Panc1 (cell line): ENCODE measurements at regions of chr1 and their contacts with region 1.

Region 1: GRCh38 chr1:28369371-28370238 is at the start of gene PHACTR4:
- DNase-seq: no peak
- ATAC-seq: peak; percentile 98
- H3K4me3 ChIP-seq: peak within 1 kb of the TSS; percentile 84 to 99
- H3K27ac ChIP-seq: peak within 1 kb of the TSS; percentile 94
- H3K4me1 ChIP-seq: peaks cover 23% of the 10 kb centered on the region
- H3K27me3 ChIP-seq: no peaks in the 10 kb centered on the region
- CTCF ChIP-seq: no peak
- total RNA-seq, gene PHACTR4: 63.4 TPM

Region 2: DNA sequence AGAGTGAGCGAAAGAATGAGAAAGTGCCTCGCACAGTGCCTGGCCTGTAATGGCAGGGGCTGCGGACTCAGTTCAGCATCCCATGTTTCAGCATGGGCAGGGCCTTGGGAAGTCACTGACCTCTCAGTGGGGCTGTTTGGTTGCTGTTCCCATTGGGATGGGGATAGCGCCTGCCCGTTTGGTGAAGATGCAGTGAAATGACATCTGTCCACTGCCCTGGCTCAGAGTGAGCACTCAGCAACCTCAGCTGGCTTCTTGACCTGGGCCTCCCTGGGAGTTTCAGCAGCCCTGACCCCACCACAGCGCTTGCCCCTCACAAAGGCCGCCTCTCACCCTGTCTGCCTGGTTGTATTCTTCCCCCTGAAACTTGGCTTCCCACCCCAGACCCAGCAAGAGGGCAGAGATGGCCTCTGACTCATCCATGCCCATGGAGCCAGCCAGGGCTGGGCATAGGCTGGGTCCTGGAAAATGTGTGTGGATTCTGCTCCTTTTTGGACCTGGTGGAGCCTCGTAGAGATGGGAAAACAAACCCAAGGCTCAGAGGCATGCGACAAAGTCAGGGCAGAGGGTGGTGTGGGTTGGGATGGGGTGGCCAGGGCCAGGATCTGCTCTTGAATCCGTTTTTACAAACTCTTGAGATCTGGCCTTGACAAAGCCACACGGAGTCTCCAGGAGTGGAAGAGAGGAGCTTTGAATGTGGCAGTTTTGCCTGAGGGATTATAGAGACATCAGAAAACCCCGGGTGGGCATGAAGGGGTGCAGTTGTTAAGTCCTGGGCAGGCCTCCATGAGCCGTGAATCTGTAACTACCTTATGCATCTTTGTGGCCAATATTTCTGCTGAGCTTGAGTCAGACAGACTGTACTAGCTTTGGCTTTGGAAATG is 408.6 kb before region 1 on chr1:
- CTCF ChIA-PET with region 1: interaction called, 11 read pairs
- POLR2A ChIA-PET with region 1: no interaction called
- in situ Hi-C with region 1: no loop called
- intact Hi-C with region 1: no loop called
- DNase-seq: no peak
- ATAC-seq: no peak
- H3K4me3 ChIP-seq: peak overlapping the region; percentile 78 to 83; a peak in 3 of 4 replicates
- H3K27ac ChIP-seq: peak overlapping the region; percentile 83; the same call in 1 of the 2 replicates
- H3K4me1 ChIP-seq: peaks cover 22% of the 10 kb centered on the region
- H3K27me3 ChIP-seq: no peaks in the 10 kb centered on the region
- CTCF ChIP-seq: no peak

Region 3: GRCh38 chr1:28180306-28181305 is 189.0 kb before region 1 on chr1:
- CTCF ChIA-PET with region 1: interaction called, 13 read pairs
- POLR2A ChIA-PET with region 1: no interaction called
- in situ Hi-C with region 1: no loop called
- intact Hi-C with region 1: no loop called
- DNase-seq: no peak
- ATAC-seq: no peak
- H3K4me3 ChIP-seq: no peak overlapping the region
- H3K27ac ChIP-seq: no peak overlapping the region
- H3K4me1 ChIP-seq: no peaks in the 10 kb centered on the region
- H3K27me3 ChIP-seq: no peaks in the 10 kb centered on the region
- CTCF ChIP-seq: no peak

Region 4: DNA sequence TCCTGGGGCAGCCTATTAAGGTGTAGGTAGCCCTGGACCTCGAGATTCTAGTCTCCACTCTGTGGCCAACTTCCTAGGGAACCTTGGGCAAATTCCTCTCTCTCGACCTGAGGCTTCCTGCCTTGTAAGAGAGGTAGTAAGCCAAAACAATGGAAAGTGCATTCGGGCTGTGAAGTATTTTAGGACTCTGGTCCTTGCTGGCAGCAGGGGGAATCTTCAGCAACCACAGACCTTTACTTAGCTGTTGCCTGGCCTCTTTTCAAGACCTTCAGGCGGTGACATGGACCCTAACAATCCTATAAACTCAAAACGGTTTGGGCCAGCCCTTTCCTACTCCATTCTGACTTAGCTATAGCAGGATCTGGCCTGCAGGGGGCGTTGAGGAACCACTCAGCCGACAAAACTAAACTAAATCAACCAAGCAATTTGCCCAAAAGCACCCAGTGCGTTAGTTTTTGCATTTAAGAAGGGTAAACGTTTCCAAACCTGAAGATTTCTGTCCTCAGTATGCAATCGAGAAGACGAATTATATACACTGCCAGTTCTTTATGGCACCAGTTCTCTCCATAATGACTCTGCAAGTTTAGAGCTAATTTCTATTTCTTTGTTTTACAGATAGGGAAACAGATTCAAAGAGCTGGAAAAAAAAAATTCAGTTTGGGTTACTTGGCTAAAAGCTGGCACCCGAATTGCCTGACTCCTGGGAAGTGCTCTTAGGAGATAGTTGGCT is 121.2 kb before region 1 on chr1:
- CTCF ChIA-PET with region 1: interaction called, 39 read pairs
- POLR2A ChIA-PET with region 1: interaction called, 22 read pairs
- in situ Hi-C with region 1: no loop called
- intact Hi-C with region 1: loop called (anchors 2 kb)
- DNase-seq: no peak
- ATAC-seq: peak; percentile 67
- H3K4me3 ChIP-seq: peak overlapping the region; percentile 65 to 81
- H3K27ac ChIP-seq: peak overlapping the region; percentile 77
- H3K4me1 ChIP-seq: peaks cover 29% of the 10 kb centered on the region
- H3K27me3 ChIP-seq: no peaks in the 10 kb centered on the region
- CTCF ChIP-seq: peak; percentile 97

Region 5: DNA sequence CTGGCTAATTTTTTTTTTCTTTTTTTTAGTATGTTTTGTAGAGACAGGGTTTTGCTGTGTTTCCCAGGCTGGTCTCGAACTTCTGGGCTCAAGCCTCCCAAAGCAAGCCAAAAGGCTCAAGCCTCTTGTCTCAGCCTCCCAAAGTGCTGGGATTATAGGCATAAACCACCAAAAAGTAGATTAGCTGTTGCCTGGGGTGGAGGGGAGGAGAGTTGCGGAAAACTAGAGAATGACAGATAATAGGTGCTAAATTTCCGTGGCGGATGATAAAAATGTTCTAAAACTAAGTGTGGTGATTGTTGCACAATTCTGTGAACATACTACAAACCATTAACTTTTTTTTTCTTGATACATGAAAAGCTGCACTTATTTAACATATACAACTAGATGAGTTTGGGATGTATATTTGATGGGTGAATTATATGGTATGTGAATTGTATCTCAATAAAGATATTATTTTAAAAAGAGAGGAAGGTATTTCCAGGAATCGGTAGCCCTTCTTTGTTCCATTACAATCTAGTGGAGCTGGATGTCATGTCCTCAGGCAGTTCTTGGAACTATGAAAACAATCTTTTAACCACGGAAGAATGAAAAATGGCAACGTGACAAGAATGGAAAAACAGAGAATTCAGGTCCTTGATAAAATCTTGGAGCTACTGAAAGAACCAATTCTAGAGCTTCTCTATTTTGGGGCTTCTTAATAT is 68.0 kb before region 1 on chr1:
- CTCF ChIA-PET with region 1: no interaction called
- POLR2A ChIA-PET with region 1: interaction called, 10 read pairs
- in situ Hi-C with region 1: no loop called
- intact Hi-C with region 1: no loop called
- DNase-seq: no peak
- ATAC-seq: no peak
- H3K4me3 ChIP-seq: no peak overlapping the region
- H3K27ac ChIP-seq: no peak overlapping the region
- H3K4me1 ChIP-seq: no peaks in the 10 kb centered on the region
- H3K27me3 ChIP-seq: no peaks in the 10 kb centered on the region
- CTCF ChIP-seq: no peak

Region 6: GRCh38 chr1:28395181-28395580 is 25.6 kb after region 1 on chr1:
- CTCF ChIA-PET with region 1: no interaction called
- POLR2A ChIA-PET with region 1: interaction called, 12 read pairs
- in situ Hi-C with region 1: no loop called
- intact Hi-C with region 1: no loop called
- DNase-seq: no peak
- ATAC-seq: no peak
- H3K4me3 ChIP-seq: no peak overlapping the region
- H3K27ac ChIP-seq: no peak overlapping the region
- H3K4me1 ChIP-seq: no peaks in the 10 kb centered on the region
- H3K27me3 ChIP-seq: no peaks in the 10 kb centered on the region
- CTCF ChIP-seq: no peak

Region 7: DNA sequence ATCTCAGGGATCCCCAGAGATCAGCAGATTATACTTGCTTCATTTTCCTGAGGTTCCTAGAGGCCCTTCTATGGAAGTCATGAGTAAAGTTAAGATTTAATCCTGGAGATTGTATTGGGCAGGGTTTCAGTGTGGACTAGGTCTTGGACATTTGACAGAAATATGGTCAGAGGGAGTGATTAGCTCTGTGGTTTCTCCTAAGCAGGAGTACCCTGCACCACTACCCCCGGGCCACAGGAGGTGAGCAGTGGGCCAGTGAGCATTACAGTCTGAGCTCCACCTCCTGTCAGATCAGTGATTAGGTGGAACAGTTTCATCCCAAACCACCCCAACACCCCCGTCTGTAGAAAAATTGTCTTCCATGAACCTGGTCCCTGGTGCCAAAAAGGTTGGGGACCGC is 43.1 kb after region 1 on chr1:
- CTCF ChIA-PET with region 1: no interaction called
- POLR2A ChIA-PET with region 1: no interaction called
- in situ Hi-C with region 1: no loop called
- intact Hi-C with region 1: no loop called
- DNase-seq: no peak
- ATAC-seq: no peak; the same call in 1 of the 2 replicates
- H3K4me3 ChIP-seq: no peak overlapping the region
- H3K27ac ChIP-seq: no peak overlapping the region
- H3K4me1 ChIP-seq: peaks cover 8% of the 10 kb centered on the region; the same call in 1 of the 2 replicates
- H3K27me3 ChIP-seq: no peaks in the 10 kb centered on the region
- CTCF ChIP-seq: no peak